ENCODE measurements at regions of chr13 and their contacts with region 1.

Region 1: DNA sequence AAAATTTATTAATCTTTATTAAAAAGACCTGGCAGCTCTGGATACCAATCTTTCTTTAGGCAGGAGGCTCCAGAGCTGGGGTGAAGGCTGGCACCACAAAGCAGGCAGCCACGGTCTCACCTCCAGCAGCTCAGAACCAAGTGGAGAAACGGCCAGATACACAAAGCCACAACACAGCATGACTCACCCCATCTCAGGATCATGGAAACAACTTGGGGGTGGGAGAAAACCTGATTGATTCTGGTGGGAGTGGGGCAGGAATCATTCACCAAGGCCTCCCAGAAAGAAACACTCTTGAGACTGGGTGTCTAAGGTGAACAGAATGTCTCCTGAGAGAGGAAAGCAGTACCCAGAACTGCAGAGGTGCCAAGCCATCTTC is 64.2 kb downstream of the CRYL1 start:
- DNase-seq: no peak
- H3K4me3 ChIP-seq: no peak overlapping the region
- H3K27ac ChIP-seq: no peak overlapping the region
- H3K4me1 ChIP-seq: no peaks in the 10 kb centered on the region
- H3K27me3 ChIP-seq: no peaks in the 10 kb centered on the region
- CTCF ChIP-seq: no peak
- POLR2A ChIP-seq: no peak

Region 2: DNA sequence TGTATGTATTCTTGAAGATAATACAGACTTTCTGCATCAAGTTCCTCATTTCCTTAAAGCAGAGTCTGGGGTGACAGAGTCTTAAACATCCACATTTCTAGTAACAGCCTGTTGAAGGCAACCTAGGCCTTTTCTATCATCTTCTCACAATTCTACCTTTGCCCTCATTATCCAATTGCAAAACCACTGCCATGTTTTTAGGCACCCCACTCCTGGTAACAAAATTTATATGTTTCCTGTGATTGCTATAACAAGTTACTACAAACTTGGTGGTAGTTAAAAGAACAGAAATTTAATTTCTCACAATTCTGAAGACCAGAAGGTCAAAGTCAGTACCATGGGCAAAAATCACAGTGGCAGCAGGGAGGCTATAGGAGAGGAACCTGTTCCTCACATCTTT is 1312.9 kb before region 1 on chr13:
- intact Hi-C with region 1: no loop called
- DNase-seq: no peak
- H3K4me3 ChIP-seq: no peak overlapping the region
- H3K27ac ChIP-seq: no peak overlapping the region
- H3K4me1 ChIP-seq: no peaks in the 10 kb centered on the region
- H3K27me3 ChIP-seq: no peaks in the 10 kb centered on the region
- CTCF ChIP-seq: no peak
- POLR2A ChIP-seq: no peak

Region 3: GRCh38 chr13:21106089-21106488 is 644.6 kb after region 1 on chr13:
- intact Hi-C with region 1: loop called (anchors 5 kb)
- DNase-seq: no peak
- H3K4me3 ChIP-seq: no peak overlapping the region
- H3K27ac ChIP-seq: no peak overlapping the region
- H3K4me1 ChIP-seq: no peaks in the 10 kb centered on the region
- H3K27me3 ChIP-seq: no peaks in the 10 kb centered on the region
- CTCF ChIP-seq: no peak
- POLR2A ChIP-seq: no peak

Measured in breast epithelium (tissue), 4 donors.